HepG2 (cell line): ENCODE measurements at regions of chr17 and their contacts with region 1.

Region 1: DNA sequence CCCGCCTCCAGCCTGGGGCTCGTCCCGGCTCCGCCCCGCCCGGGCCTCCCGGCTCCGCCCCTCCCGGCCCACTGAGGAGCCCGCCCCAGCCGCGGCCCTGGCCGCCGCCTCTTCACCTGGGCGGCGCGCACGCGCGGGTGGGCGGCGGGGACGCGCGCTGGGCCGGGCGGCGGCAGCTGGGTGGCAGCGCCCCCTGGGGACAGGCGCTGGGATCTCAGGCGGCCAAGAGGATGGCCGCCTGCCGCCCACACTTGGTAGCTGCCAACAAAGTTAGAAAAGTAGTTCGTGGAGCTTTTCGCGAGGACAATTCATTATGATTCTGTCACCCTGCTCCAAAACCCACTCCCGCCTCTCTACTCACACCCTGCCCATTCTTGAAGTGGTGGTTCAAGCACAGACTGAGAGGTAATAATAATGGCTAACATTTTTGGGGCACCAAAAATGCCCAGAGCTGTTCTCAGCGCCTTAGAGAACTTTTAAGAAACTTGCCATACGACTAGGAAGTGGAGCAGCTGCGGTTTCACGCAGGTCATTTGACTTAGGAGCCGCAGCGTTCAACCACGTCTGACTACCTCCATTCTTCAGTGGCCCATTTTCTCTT is 340 bp upstream of the MYO1D start:
- DNase-seq: peak; percentile 70
- ATAC-seq: peak; percentile 93
- H3K4me3 ChIP-seq: peak overlapping the region; percentile 78 to 92 (median 87)
- H3K27ac ChIP-seq: peak overlapping the region; percentile 63
- H3K4me1 ChIP-seq: peaks cover 50% of the 10 kb centered on the region
- H3K27me3 ChIP-seq: no peaks in the 10 kb centered on the region
- CTCF ChIP-seq: peak; percentile 69
- EP300 ChIP-seq: no peak
- POLR2A ChIP-seq: no peak
- RAD21 ChIP-seq: peak; percentile 97

Region 2: GRCh38 chr17:32828822-32829221 is 48.4 kb before region 1 on chr17:
- CTCF ChIA-PET with region 1: no interaction called
- POLR2A ChIA-PET with region 1: interaction called, 4 read pairs
- in situ Hi-C with region 1: no loop called
- intact Hi-C with region 1: loop called (anchors 2 kb)
- DNase-seq: no peak
- ATAC-seq: peak; percentile 48; the same call in 2 of the 3 replicates
- H3K4me3 ChIP-seq: peak overlapping the region; percentile 37 to 63 (median 62)
- H3K27ac ChIP-seq: peak overlapping the region; percentile 53
- H3K4me1 ChIP-seq: peaks cover 32% of the 10 kb centered on the region
- H3K27me3 ChIP-seq: no peaks in the 10 kb centered on the region
- CTCF ChIP-seq: no peak
- EP300 ChIP-seq: no peak
- POLR2A ChIP-seq: no peak
- RAD21 ChIP-seq: no peak

Region 3: DNA sequence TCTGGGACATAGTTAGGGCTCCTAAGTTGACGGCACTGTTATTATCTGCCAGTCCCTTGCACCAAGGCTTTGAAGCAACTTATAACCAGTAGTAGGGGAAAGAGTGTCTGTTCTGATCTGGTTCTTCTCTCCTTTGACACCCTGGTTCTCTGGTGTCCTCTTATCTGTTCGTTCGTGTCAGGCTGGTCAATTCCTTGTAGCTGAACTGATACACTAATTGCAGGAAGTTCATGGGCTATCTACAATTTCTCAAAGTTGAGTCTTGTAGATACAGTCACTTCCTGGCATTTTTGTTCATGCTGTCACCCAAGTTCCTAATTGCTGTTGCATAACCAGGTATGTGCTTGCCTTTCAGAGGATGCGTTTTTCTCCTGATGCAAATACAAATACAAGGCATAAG is 17.0 kb after region 1 on chr17:
- CTCF ChIA-PET with region 1: no interaction called
- POLR2A ChIA-PET with region 1: no interaction called
- in situ Hi-C with region 1: no loop called
- intact Hi-C with region 1: no loop called
- DNase-seq: no peak
- ATAC-seq: no peak
- H3K4me3 ChIP-seq: no peak overlapping the region
- H3K27ac ChIP-seq: no peak overlapping the region
- H3K4me1 ChIP-seq: no peaks in the 10 kb centered on the region
- H3K27me3 ChIP-seq: peaks cover 0 to 11% of the 10 kb centered on the region in 2 experiments; a peak in 2 of 5 replicates
- CTCF ChIP-seq: no peak
- EP300 ChIP-seq: no peak
- POLR2A ChIP-seq: no peak
- RAD21 ChIP-seq: no peak

Region 4: DNA sequence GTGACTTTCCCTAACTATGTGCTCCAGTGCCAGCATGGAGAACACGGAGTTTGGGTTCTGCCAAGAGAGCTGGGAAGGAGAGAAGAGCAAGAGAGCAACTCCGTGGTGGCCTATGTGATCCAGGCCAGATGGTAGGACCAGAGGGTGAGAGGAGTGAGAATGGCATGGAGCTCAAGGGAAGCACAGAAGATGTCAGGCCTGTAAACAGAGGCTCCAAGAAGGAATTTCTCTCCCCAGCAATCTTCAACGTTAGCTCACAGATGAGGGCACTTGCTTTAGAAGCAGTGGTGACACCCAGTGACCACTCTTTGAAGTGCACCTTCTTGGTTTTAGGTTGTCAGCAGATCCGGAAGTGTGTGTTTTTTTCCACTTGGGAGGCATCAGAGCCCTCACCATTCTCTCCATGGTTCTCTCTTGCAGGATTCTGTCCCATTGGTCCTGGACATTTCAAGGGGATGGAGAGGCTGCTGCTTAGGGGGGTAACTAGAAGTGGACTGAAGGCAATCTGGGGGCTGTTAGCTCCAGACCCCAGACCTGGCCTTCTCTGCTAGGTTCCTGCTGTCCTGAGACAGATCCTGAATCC is 32.6 kb after region 1 on chr17:
- CTCF ChIA-PET with region 1: interaction called, 7 read pairs
- POLR2A ChIA-PET with region 1: interaction called, 3 read pairs
- in situ Hi-C with region 1: no loop called
- intact Hi-C with region 1: loop called (anchors 2 kb)
- DNase-seq: peak; percentile 71
- ATAC-seq: peak; percentile 74
- H3K4me3 ChIP-seq: no peak overlapping the region
- H3K27ac ChIP-seq: no peak overlapping the region
- H3K4me1 ChIP-seq: peaks cover 54% of the 10 kb centered on the region
- H3K27me3 ChIP-seq: no peaks in the 10 kb centered on the region
- CTCF ChIP-seq: peak; percentile 90
- EP300 ChIP-seq: no peak
- POLR2A ChIP-seq: no peak
- RAD21 ChIP-seq: peak; percentile 45; the same call in 1 of the 2 replicates